Endothelial cell of umbilical vein (primary cell): ENCODE measurements at regions of chr4 and their contacts with region 1.

Region 1: DNA sequence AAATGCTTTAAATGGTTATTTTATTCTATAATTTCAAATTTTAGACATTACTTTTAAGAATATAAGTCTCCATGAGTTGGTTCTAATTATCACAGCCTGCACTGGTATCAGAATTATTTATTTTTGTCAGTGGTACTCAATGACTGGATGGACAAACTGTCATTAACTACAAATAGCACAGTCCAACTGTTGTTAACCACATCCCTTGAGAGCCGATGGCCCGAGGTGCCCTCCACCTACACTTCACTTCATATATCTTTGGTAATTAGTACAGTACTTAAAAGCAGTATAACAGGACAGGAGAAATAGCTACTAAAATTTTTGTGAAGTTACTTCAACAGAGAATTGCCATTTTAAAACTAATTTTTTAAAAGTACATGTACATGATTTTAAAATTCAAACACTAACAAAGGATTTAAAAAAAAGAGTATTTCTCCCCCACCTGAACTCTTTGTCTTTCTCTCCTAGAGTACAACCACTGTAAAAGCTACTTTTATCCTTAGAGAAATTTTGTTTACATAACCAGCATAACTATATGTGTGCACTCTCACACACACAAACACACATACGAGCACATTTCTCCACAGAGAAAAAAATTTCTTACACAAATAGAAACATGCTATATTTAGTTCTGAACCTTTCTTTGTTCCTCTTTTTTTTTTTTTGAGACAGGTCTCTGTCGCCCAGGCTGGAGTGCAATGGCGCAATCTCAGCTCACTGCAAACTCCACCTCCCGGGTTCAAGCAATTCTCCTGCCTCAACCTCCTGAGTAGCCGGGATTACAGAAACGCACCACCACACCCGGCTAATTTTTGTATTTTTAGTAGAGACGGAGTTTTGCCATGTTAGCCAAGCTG is 6.5 kb downstream of the TIFA start:
- DNase-seq: no peak
- H3K4me3 ChIP-seq: no peak overlapping the region
- H3K27ac ChIP-seq: no peak overlapping the region
- H3K4me1 ChIP-seq: peaks cover 12% of the 10 kb centered on the region
- H3K27me3 ChIP-seq: no peaks in the 10 kb centered on the region
- CTCF ChIP-seq: no peak
- POLR2A ChIP-seq: no peak

Region 2: DNA sequence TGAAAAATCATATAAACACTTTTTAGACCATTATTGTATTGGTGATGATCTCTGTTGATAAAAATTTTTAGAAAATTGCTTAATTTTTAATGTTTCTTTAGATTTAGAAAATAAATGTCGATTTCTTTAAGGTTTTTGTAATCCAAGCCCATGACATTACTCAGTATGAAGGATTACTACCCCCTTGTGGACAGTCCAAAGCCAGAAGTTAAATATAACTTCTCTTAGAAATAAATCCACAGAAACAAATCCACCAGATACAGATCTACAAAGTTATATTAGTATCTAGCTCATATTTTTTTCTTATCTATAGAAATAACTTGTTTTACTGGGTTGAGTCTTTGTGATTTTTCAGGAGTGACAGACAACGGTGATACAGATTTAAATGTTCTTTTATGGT is 12.4 kb before region 1 on chr4:
- CTCF ChIA-PET with region 1: interaction called, 13 read pairs
- POLR2A ChIA-PET with region 1: no interaction called
- dilution Hi-C with region 1: no loop called
- intact Hi-C with region 1: loop called (anchors 2 kb)
- DNase-seq: peak; percentile 50
- H3K4me3 ChIP-seq: no peak overlapping the region
- H3K27ac ChIP-seq: no peak overlapping the region
- H3K4me1 ChIP-seq: no peaks in the 10 kb centered on the region
- H3K27me3 ChIP-seq: no peaks in the 10 kb centered on the region
- CTCF ChIP-seq: peak; percentile 17 to 25
- POLR2A ChIP-seq: no peak